ENCODE measurements at regions of chr3 and their contacts with region 1.

Region 1: GRCh38 chr3:68378631-68379030 is 553.7 kb downstream of the TAFA4 start:
- DNase-seq: no peak
- H3K4me3 ChIP-seq: no peak overlapping the region
- CTCF ChIP-seq: no peak
- POLR2A ChIP-seq: no peak

Region 2: DNA sequence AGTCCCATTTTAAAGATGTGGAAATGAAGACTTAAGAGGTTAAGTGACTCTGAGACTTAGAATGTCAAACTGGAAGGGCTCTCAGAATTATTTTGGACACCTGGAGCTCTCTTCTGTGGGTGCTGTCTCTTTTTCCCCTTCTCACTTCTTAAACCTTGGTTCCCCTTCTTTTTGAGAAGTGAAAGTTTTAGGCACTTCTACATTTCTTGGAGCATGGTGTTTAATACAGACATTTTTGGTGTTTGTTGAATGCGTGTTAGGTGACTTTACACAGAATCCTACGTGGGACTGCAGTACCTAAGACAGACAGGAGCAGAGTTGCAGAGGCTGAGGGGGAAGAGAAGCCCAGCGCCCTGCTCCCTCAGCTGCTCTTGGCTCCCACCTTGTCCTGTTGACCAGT is 1800.5 kb after region 1 on chr3:
- intact Hi-C with region 1: loop called (anchors 10 kb)
- DNase-seq: no peak
- H3K4me3 ChIP-seq: no peak overlapping the region
- CTCF ChIP-seq: no peak
- POLR2A ChIP-seq: no peak

Measured in lower leg skin (tissue), 4 donors.